ENCODE measurements at regions of chr7 and their contacts with region 1.

Region 1: DNA sequence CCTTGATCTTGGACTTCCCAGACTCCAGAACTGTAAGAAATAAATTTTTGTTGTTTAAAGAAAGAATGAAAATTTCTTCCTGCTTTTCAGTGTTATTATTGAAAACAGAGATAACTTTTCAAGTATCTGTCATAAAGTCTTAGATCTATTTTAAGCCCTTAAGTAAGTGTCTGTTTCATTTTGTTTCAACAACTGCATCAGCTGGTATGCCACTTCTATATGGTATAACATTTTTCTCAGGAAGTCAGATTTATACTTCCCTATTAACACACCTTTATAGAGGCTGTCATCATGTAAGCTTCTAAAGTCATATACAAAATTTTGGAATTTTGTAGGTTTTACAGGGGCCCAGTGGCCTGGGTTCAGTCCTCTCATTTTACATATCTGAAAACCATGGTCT is 24.4 kb downstream of the RALA start:
- H3K4me3 ChIP-seq: no peak overlapping the region
- H3K27ac ChIP-seq: no peak overlapping the region
- H3K4me1 ChIP-seq: peaks cover 2% of the 10 kb centered on the region; the same call in 1 of the 2 replicates
- CTCF ChIP-seq: no peak

Region 2: DNA sequence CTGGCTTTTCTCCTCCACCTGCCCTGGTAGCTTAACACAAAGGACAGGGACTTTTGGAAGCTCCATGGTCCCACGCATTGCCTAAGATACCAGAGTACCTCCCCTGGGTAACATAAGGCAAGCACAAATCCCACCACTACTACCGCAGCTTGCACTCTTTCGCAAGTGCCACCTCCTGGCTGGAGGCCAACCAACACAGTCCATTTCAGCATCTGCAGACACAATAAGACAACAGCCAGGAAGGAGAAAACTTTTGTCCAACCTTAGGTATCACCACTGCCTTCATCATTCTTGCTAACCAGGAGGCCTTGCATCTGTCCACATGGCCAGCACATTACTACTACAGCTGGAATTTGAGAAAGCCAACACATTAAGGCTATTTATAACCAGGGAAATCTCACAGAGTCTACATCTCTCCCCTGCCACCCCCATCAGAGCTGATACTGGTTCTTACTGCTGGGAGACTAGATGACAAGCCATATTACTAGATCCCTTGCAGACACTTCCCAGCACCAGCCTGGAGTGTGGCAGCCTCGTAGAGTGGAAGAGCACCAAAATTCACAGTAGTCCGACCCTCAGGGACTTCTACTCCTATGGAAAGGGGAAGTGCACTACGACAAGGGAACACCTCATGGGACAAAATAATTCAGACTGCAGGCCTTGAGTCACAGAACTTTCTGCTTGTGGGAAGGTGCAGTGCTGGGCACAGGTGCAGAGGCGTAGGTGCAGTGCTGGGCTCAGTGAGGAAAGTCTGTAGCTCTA is 262.5 kb after region 1 on chr7:
- CTCF ChIA-PET with region 1: no interaction called
- POLR2A ChIA-PET with region 1: no interaction called
- H3K4me3 ChIP-seq: no peak overlapping the region
- H3K27ac ChIP-seq: no peak overlapping the region
- H3K4me1 ChIP-seq: no peaks in the 10 kb centered on the region
- CTCF ChIP-seq: no peak

Region 3: DNA sequence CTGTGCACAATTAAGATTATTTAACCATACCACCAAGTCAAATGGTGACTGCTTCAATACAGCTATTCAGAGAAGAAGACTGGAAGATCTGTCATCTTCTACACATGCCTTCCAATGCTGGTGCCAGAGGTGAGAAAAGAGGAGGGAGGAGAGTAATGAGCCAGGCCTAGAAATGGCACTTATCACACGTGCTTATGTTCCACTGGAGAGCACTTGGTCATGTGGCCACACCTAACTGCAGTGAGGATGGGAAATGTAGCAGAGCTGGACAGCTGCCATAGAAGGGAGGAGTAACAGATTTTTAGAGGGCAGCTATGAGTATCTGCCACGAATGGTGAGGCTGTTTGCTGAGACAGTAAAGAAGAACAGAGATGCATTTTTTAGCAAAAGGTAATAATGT is 409.5 kb after region 1 on chr7:
- CTCF ChIA-PET with region 1: interaction called, 11 read pairs
- POLR2A ChIA-PET with region 1: no interaction called
- H3K4me3 ChIP-seq: no peak overlapping the region
- H3K27ac ChIP-seq: no peak overlapping the region
- H3K4me1 ChIP-seq: peaks cover 3% of the 10 kb centered on the region; the same call in 1 of the 2 replicates
- CTCF ChIP-seq: no peak

Measured in HEK293 (cell line).